ENCODE measurements at regions of chr2 and their contacts with region 1.

Region 1: DNA sequence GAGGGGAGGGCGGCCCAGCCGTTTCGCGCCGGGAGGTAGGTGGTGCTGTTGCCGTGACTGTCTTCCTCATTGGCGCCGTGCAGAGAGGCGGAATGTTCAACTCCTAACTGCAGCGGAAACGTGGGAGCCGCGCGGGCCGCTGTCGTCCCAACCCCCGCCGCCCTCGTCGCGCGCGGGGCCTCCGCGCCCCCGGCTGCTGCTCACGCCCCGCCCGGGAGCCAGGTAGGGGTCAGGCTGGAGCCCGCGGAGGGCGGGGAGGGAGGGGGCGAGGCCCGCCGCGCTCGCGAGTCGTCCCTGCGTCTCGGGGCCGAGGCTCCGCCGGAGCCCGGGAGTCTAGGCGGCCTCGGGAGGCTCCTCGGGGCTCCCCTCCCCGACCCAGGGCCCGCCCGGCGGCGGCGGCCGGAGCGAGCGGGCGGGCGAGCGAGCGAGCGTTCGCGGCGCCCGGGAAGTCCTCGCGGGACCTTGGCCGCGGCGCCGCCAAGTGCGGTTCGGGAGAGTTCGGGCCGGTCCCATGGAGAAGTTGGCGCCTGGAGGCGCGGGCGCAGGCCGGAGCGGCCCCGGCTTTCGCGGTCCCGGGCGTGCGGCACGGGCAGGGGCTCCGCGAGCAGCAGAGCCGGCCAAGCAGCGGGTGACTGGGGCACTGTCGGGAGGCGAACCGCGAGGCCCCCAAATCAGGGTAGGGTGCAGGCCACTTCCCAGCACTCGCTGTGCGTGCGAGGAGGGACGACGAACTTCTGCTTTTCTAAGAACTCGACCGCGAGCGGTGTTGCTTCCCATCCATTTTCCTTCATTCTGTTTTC is at the start of gene MAP3K20:
- H3K4me3 Mint-ChIP-seq: peak within 1 kb of the TSS; percentile 86
- H3K27ac Mint-ChIP-seq: peak within 1 kb of the TSS; percentile 90
- H3K4me1 Mint-ChIP-seq: peaks cover 24% of the 10 kb centered on the region
- H3K27me3 Mint-ChIP-seq: peaks cover 4% of the 10 kb centered on the region

Region 2: DNA sequence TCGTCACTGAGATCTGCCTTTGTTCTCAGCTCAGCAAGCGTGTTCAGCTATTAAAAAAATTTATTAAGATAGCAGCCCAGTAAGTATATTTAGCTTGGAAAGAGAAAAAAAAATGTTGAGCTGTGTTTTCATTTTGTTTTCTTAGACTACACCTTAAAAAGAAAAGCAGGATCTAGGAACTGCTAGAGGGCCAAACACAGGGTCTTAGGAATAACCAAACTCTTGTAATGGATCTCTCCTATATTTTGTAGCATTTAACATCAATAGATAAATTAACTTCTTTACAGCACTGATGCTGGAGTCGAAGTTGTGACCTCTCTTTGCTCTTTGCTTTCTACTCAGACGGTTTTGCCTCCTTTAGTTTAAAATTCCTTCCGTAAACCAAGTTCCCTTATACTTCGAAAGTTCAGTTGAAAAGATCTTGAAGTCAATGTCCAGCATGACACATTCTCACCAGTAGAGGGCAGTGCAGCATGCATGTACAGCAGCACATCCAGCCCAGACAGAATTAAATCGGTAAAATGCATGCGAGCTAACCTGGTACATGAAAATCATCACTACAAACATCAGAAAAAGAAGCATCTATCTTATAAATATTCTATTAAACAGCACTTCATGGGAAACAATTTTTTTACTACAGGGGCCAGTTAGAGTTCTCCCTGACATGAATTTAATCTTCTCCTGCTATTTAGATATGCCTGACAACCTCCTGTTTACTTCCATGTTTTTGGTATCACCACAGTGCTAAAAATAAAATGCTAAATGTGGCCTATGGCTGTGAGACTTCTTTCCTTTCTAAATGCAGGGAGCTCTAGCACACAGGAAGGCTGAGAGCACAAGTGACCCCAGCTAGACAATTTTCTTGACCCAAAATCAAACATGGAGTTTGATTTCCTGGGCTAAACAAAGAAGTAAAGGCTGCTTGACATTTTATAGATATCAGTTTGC is 48.5 kb before region 1 on chr2:
- intact Hi-C with region 1: loop called (anchors 10 kb)
- H3K4me3 Mint-ChIP-seq: no peak overlapping the region
- H3K27ac Mint-ChIP-seq: no peak overlapping the region
- H3K4me1 Mint-ChIP-seq: no peaks in the 10 kb centered on the region
- H3K27me3 Mint-ChIP-seq: peaks cover 5% of the 10 kb centered on the region

Region 3: DNA sequence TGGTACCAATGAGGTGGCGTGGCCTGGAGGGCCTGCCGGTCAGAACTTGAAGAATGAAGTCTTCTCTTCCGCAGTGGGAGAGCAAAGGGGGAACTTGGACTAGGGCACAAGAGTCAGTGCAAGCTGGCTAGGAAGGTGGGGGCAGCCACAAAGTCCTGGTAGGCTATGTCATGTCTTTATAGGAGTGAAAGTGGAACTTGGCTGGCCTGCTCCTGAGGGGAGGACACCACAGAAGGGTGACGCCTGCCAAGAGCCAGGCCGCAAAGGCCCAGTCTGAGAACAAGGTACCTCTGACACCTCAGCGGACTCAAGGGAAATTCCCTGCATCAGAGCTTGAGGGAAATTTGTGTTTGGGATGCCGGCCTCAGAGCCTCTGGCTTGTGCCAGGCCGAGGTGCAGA is 32.5 kb before region 1 on chr2:
- intact Hi-C with region 1: loop called (anchors 5 kb)
- H3K4me3 Mint-ChIP-seq: no peak overlapping the region
- H3K27ac Mint-ChIP-seq: peak overlapping the region; percentile 39
- H3K4me1 Mint-ChIP-seq: peaks cover 24% of the 10 kb centered on the region
- H3K27me3 Mint-ChIP-seq: no peaks in the 10 kb centered on the region

Region 4: DNA sequence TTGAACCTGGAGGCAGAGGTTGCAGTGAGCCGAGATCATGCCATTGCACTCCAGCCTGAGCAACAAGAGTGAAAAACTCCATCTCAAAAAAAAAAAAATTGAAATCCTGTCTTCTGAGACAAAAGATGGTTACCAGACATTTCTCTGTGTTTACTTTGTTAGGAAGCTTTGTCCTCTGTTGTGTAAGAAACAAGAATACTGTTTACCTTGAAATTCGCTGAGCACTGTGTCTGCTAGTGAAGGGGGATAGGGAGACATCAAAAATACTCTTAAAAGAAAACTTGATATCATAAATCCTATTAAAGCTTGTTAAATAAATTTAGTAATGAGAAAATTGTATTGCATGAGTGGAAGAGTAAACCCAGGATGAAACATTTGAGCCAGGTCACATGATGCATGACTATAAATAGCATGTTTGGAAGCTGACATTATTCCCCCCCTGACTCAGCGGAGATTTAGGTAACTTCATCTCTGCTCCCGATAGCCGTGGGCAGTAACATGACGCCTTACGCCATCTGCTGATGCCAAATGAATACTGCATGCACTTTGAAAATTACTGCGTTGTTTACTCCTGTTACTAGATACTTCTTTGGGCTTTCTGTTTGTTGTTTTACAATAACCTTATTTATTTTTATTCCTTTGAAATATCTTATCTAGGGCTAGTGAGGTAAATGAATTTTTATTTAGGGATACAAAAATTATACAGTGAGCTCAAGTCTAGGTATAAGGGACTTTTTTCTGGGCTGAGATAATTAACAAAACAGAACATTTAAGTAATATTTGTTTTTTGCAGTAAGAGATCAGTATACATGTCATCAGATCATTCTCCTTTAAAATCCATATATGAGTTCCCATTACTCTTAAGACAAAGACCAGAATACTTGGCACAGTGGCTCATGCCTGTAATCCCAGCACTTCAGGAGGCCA is 134.6 kb after region 1 on chr2:
- intact Hi-C with region 1: loop called (anchors 5 kb)
- H3K4me3 Mint-ChIP-seq: no peak overlapping the region
- H3K27ac Mint-ChIP-seq: peak overlapping the region; percentile 65
- H3K4me1 Mint-ChIP-seq: peaks cover 9% of the 10 kb centered on the region
- H3K27me3 Mint-ChIP-seq: no peaks in the 10 kb centered on the region

Region 5: DNA sequence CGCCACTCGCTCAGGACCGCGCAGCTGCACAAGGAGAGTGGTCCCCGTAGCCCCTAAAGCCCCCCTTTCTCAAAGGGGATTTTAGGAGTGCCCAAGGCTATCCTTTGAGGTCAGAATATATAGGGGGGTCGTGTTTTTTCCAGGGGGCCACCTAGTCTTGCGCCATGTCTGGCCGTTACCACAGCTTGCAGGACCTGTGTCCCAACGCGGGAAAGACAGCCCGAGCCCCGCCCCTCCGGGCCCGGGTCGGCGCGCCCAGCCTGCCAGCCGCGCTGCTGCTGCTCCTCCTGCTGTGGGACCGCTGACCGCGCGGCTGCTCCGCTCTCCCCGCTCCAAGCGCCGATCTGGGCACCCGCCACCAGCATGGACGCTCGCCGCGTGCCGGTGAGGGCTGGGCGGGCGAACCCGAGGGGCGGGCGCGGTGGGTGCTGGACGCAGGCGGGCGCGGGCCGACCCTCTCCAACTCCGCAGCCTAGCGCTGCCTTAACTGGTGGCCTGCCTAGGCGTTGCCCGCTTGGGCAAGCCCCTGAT is 278.7 kb after region 1 on chr2 and contains the start of gene CDCA7:
- intact Hi-C with region 1: no loop called
- H3K4me3 Mint-ChIP-seq: peak within 1 kb of the TSS; percentile 86
- H3K27ac Mint-ChIP-seq: peak within 1 kb of the TSS; percentile 79
- H3K4me1 Mint-ChIP-seq: peaks cover 13% of the 10 kb centered on the region
- H3K27me3 Mint-ChIP-seq: peaks cover 19% of the 10 kb centered on the region

Region 6: GRCh38 chr2:173402405-173402974 is 326.5 kb after region 1 on chr2:
- intact Hi-C with region 1: no loop called
- H3K4me3 Mint-ChIP-seq: peak overlapping the region; percentile 37
- H3K27ac Mint-ChIP-seq: no peak overlapping the region
- H3K4me1 Mint-ChIP-seq: peaks cover 7% of the 10 kb centered on the region
- H3K27me3 Mint-ChIP-seq: peaks cover 70% of the 10 kb centered on the region

Measured in dendritic cell treated with granulocyte-macrophage colony-stimulating factor and Interleukin-4, amounts not matched to agents 40 ng/mL and 50 ng/mL, for 4 days (primary cell).